ENCODE measurements at regions of chr17 and their contacts with region 1.

Region 1: GRCh38 chr17:60630352-60630751 is 30.4 kb downstream of the PPM1D start:
- DNase-seq: peak in 1 of 2 donors; percentile 27
- ATAC-seq: no peak
- H3K4me3 ChIP-seq: no peak overlapping the region
- H3K27ac ChIP-seq: peak overlapping the region in 1 of 10 donors; percentile 32
- H3K4me1 ChIP-seq: peaks cover 0 to 13% (median 0%) of the 10 kb centered on the region in 9 donors
- H3K27me3 ChIP-seq: no peaks in the 10 kb centered on the region
- CTCF ChIP-seq: no peak

Region 2: DNA sequence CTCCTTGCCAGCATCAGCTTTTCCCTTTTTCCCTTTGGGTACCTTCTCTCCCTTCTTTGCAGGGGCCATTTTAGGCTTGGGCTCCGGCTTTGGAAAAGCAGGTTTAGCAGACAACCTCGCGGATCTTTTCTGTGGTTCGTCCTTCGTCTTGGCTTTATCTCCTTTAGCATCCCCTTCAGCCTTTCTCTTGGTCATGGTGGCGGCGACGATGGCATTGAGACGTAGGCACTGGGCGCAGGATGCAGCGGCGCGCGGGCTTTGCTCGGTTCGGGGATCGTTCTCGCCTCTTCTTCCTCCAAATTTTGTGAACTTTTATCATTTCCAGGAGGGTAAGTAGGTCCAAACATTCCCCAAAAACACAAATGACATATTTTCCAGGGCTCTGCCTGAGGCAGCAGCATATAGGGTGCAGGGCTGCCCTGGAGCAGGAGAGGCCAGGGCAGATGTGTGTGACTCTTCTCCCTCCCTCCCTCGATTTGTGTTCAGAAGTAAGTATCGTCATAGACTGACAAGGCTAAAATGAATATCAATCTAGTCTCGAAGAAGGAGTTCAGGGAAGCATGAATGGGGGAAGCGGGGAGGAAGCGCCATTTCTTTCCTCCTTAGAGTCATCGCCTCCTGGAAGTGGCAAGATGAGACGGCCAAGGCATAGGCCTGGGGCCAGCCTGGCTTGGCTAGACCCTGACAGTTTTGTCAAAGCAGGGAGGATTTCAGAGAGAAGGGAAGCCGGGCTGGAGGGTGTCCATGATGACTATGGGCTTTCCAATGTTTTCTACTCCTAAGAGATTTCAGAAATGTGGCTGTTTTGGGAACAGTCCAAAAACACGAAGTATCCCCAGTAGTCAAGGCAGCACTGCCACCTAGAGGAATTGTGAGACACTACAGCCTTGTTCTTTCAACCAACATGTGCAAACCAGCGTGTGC is 194.8 kb before region 1 on chr17:
- intact Hi-C with region 1: loop called in 1 of 10 experiments (anchors 10 kb)
- DNase-seq: peak; percentile 48 to 85
- ATAC-seq: peak; percentile 71 to 94 (median 88)
- H3K4me3 ChIP-seq: peak overlapping the region in 3 of 10 donors; percentile 12 to 19 (median 18)
- H3K27ac ChIP-seq: peak overlapping the region in 5 of 10 donors; percentile 2 to 57 (median 12)
- H3K4me1 ChIP-seq: peaks cover 0 to 10% (median 4%) of the 10 kb centered on the region in 9 donors
- H3K27me3 ChIP-seq: peaks cover 0 to 6% (median 0%) of the 10 kb centered on the region in 7 donors
- CTCF ChIP-seq: peak; percentile 83 to 95 (median 92)

Region 3: GRCh38 chr17:60468371-60468770 is 162.0 kb before region 1 on chr17:
- intact Hi-C with region 1: loop called in 4 of 10 experiments (anchors 10 kb)
- DNase-seq: no peak
- ATAC-seq: no peak
- H3K4me3 ChIP-seq: no peak overlapping the region
- H3K27ac ChIP-seq: no peak overlapping the region
- H3K4me1 ChIP-seq: peaks cover 0 to 36% (median 26%) of the 10 kb centered on the region in 9 donors
- H3K27me3 ChIP-seq: no peaks in the 10 kb centered on the region
- CTCF ChIP-seq: no peak

Region 4: DNA sequence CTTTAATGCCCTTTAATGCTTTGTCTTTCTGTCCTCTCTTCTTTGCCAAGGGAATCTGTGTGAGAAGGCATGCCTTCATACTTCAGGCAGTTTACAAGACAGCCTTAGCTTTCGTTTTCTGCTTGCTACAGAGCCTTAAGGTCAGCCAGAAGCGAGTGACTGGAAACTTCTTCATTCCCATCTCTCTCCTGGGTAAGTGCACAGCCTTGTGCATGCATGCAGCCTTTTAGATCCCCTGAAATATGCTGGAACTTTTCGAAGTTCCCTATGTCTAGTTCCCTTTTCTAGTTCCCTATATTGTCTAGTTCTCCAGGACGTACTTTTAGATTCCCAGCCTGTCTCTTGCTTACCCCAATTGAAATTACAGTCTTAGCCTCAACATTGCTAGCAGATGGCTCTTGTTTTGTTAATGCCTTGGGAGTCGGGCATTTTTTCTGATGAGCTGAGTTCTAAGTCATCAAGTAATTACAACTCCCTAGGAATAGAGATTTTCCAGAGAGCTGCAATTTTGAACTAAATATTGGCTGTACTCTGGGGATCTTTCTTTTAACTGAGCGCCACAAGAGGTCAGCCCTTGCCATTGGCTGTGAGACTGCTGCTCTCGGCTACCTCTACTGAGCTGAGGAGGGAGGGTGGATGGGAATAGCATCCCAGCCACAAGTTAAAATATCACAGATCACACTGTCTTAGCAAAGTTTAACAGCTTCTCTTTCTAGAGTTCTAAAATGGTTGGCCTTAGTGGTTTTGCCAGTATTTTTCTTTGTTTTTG is 53.0 kb before region 1 on chr17:
- intact Hi-C with region 1: loop called in 4 of 10 experiments (anchors 5 to 10 kb)
- DNase-seq: peak in 1 of 2 donors; percentile 43
- ATAC-seq: peak; percentile 62 to 90 (median 86)
- H3K4me3 ChIP-seq: peak overlapping the region in 8 of 10 donors; percentile 27 to 56 (median 44)
- H3K27ac ChIP-seq: peak overlapping the region; percentile 20 to 85 (median 64)
- H3K4me1 ChIP-seq: peaks cover 0 to 54% (median 18%) of the 10 kb centered on the region in 9 donors
- H3K27me3 ChIP-seq: no peaks in the 10 kb centered on the region
- CTCF ChIP-seq: peak in 7 of 9 donors; percentile 25 to 68 (median 51)